ENCODE measurements at regions of chr16 and their contacts with region 1.

Region 1: GRCh38 chr16:82626791-82627261 is at the start of gene CDH13:
- DNase-seq: peak; percentile 73
- H3K4me3 ChIP-seq: peak within 1 kb of the TSS; percentile 69 to 83 (median 77)
- H3K27ac ChIP-seq: peak within 1 kb of the TSS; percentile 99
- H3K4me1 ChIP-seq: peaks cover 34% of the 10 kb centered on the region
- H3K27me3 ChIP-seq: no peaks in the 10 kb centered on the region
- CTCF ChIP-seq: no peak
- total RNA-seq, gene CDH13: 141 to 157 TPM

Region 2: DNA sequence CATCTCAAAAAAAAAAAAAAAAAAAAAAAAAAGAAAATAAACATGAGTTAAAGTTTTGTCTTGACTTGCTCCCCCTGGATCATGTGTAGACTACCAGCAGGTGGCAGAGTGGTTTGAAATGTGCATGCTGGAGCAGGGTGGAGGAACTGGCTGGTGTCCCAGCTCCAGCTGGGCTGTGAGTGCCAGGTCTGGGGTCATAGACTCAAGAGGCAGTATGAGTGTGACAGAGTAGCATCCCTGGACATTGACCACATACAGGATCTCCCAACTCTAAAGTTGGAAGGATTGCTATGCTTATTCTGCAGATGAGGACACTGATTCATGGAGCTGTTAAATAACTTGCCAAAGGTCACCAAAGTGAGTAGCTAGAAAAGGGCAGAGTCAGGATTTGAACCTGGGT is 258.8 kb before region 1 on chr16:
- CTCF ChIA-PET with region 1: no interaction called
- dilution Hi-C with region 1: no loop called
- in situ Hi-C with region 1: no loop called
- intact Hi-C with region 1: loop called (anchors 2 kb)
- DNase-seq: peak; percentile 12
- H3K4me3 ChIP-seq: no peak overlapping the region
- H3K27ac ChIP-seq: no peak overlapping the region
- H3K4me1 ChIP-seq: no peaks in the 10 kb centered on the region
- H3K27me3 ChIP-seq: peaks cover 7% of the 10 kb centered on the region
- CTCF ChIP-seq: peak; percentile 43 to 57

Region 3: DNA sequence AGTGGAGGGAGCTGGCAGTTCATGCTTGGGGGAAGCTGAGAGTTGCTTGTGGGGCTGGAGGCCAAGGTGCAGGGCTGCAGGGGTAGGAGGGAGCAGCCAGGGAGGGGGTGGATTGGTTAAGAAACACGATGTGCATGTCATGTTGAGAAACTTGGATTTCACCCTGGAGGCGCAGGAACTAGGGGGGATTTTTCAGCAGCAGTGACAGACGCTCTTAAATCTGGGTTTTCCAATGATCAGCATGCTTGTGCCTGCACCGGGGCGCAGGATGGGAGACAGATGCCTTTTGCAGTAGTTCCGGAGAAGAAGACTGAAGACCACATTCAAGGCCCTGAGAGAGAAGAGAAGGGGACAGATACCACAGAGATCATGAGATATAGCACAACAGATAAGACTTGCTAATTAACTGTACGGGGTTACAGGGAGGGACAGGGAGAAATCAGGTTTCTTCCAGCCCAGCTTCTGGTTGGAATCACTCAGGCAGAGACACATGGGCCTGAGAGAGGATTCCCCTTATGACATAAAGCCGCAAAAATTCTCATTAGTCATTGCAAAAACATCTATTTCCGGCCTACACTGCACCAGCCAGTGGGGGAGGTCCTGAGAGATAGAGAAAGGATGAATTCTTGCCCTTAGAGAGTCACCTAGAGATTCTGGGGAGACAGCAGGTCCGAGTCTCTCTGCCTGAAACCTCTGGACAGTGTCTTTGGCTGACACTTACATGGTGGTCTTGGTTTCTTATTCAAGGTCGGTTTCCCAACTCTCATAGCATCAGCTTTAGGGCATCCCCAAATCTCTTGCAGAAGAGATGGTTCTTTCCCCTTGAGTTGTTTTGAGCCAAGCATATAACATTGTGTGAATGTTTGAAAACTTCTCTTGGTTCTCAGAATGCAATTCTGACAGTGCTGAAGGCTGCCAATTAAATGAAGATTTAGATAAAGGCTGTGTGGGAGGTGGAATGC is 27.0 kb after region 1 on chr16:
- CTCF ChIA-PET with region 1: no interaction called
- dilution Hi-C with region 1: no loop called
- in situ Hi-C with region 1: no loop called
- intact Hi-C with region 1: loop called (anchors 1 kb)
- DNase-seq: peak; percentile 89
- H3K4me3 ChIP-seq: peak overlapping the region in 1 of 3 experiments; percentile 13
- H3K27ac ChIP-seq: peak overlapping the region; percentile 91
- H3K4me1 ChIP-seq: peaks cover 75% of the 10 kb centered on the region
- H3K27me3 ChIP-seq: no peaks in the 10 kb centered on the region
- CTCF ChIP-seq: no peak

Region 4: GRCh38 chr16:82738699-82739098 is 111.9 kb after region 1 on chr16:
- CTCF ChIA-PET with region 1: no interaction called
- dilution Hi-C with region 1: no loop called
- in situ Hi-C with region 1: no loop called
- intact Hi-C with region 1: loop called (anchors 5 kb)
- DNase-seq: no peak
- H3K4me3 ChIP-seq: no peak overlapping the region
- H3K27ac ChIP-seq: no peak overlapping the region
- H3K4me1 ChIP-seq: no peaks in the 10 kb centered on the region
- H3K27me3 ChIP-seq: no peaks in the 10 kb centered on the region
- CTCF ChIP-seq: peak; percentile 16 to 33

Region 5: DNA sequence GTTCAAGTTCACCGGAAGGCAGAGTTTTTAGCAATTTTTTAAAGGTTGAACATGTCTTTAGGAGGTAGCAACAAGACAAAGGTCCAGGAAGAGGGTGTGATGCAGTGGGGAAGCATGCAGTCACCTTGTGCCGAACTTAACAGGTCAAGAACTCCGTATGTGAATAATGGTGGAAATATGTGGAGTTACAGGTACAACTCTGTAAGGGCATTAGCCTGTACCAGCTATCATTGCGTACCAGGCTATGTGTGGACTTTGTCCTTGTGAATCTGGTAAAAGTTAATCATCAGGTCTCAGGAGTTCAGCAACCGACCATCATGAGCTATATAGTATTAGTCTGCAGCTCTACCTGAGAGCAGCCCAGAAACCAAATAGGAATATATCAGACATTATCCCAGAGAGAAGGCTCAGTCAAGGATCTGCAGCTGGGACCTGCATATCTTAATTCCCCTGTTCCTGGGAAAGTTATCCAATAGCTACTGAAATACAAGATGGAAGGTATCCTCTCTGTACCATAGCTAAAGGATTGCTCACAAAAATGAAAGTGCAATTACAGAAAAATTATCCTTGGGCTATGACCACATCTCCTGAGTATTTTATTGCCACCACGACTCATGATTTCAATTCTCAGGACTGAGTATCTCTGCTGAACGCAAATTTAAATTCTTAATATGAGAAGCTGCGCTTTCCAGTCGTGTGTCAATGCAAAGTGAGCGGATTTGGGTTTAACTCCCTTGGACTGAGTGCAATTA is 469.3 kb after region 1 on chr16:
- CTCF ChIA-PET with region 1: no interaction called
- dilution Hi-C with region 1: no loop called
- in situ Hi-C with region 1: no loop called
- intact Hi-C with region 1: loop called (anchors 5 kb)
- DNase-seq: peak; percentile 51
- H3K4me3 ChIP-seq: no peak overlapping the region
- H3K27ac ChIP-seq: peak overlapping the region; percentile 6
- H3K4me1 ChIP-seq: peaks cover 25% of the 10 kb centered on the region
- H3K27me3 ChIP-seq: no peaks in the 10 kb centered on the region
- CTCF ChIP-seq: no peak